ENCODE measurements at regions of chr6 and their contacts with region 1.

Region 1: GRCh38 chr6:152124429-152125074 is 317.1 kb downstream of the ESR1 start:
- DNase-seq: peak; percentile 54
- CTCF ChIP-seq: peak; percentile 59

Region 2: DNA sequence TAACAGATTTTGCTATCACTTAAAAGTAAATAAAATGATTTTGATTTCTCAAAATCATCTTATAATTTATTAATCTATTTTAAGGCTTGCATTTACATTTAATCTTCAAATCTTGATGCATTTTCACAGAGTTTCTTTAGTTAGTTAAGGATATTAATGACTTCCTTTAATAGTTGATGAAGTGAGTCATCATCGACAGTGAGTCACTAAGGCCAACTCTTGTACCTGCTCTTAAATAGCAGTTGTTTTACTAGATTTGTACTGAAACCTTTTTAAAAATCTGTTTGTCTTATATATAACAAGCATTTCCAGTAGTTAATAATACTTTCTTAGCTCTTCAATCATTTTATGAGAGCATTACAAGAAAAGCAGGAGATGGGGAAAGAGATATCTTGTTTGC is 125.4 kb before region 1 on chr6:
- CTCF ChIA-PET with region 1: no interaction called
- POLR2A ChIA-PET with region 1: no interaction called
- DNase-seq: no peak
- CTCF ChIP-seq: no peak

Region 3: GRCh38 chr6:152136453-152136825 is 11.9 kb after region 1 on chr6:
- CTCF ChIA-PET with region 1: interaction called, 12 read pairs
- POLR2A ChIA-PET with region 1: no interaction called
- DNase-seq: no peak
- CTCF ChIP-seq: no peak